ENCODE measurements at regions of chr16 and their contacts with region 1.

Region 1: DNA sequence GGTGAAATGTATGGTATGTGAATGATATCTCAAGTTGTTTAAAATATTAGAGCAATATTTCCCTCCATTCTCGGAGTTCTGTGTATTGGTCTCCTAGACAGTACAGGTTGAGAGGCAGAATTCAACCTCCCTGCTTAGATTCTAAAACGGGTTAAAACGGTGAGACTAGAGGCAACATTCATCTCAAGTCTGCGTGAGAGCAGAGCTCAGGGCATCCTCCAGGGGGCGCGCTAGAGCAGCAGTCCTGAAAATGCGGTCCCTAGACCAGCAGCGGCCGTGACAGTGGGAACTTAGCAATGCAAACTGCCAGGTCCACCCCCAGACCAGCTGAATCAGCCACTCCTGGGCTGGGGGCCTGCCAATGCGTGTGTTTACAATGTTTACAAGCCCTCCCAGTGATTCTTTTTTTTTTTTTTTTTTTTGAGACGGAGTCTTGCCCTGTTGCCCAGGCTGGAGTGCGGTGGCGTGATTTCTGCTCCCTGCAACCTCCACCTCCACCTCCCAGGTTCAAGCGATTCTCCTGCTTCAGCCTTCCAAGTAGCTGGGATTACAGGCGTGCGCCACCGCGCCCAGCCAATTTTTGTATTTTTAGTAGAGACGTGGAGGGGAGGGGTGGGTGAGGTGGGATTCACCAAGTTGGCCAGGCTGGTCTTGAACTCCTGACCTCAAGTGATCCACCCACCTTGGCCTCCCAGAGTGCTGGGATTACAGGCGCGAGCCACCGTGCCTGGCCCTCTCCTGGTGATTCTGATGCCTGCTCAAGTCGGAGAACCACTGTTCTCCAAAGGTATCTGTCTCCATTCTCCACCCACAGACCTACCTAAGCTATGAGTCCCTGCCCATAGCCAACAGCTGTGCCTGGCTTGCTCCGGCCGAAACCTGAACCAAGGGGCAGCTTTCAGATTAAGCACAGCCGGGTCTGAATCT is 24.2 kb downstream of the KLHL36 start:
- DNase-seq: peak; percentile 64 to 91 (median 80)
- ATAC-seq: peak; percentile 97
- H3K4me3 ChIP-seq: no peak overlapping the region
- H3K4me3 Mint-ChIP-seq: no peak overlapping the region
- H3K27ac ChIP-seq: no peak overlapping the region
- H3K27ac Mint-ChIP-seq: no peak overlapping the region
- H3K4me1 ChIP-seq: no peaks in the 10 kb centered on the region
- H3K4me1 Mint-ChIP-seq: peaks cover 6% of the 10 kb centered on the region
- H3K27me3 ChIP-seq: no peaks in the 10 kb centered on the region
- H3K27me3 Mint-ChIP-seq: no peaks in the 10 kb centered on the region
- CTCF ChIP-seq: peak; percentile 83

Region 2: DNA sequence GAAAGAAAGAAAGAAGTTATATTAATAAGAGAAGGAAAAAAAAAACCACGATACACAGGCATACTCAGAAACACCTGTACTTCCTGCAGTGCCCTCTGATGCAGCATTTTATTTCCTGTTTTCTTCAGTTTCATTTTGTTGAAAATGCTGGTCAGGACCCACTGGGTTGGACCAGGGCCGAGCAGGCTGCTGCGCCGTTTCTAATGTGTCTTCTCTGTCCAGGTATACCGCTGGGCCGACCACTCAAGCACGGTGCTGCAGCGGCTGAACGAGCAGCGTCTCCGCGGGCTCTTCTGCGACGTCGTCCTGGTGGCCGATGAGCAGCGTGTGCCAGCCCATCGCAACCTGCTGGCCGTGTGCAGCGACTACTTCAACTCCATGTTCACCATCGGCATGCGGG is 15.9 kb before region 1 on chr16:
- CTCF ChIA-PET with region 1: interaction called, 26 read pairs
- POLR2A ChIA-PET with region 1: no interaction called
- intact Hi-C with region 1: no loop called
- DNase-seq: no peak
- ATAC-seq: no peak
- H3K4me3 ChIP-seq: peak overlapping the region in 1 of 2 experiments; percentile 28
- H3K4me3 Mint-ChIP-seq: peak overlapping the region; percentile 50
- H3K27ac ChIP-seq: no peak overlapping the region
- H3K27ac Mint-ChIP-seq: no peak overlapping the region
- H3K4me1 ChIP-seq: peaks cover 67% of the 10 kb centered on the region
- H3K4me1 Mint-ChIP-seq: peaks cover 65% of the 10 kb centered on the region
- H3K27me3 ChIP-seq: no peaks in the 10 kb centered on the region
- H3K27me3 Mint-ChIP-seq: no peaks in the 10 kb centered on the region
- CTCF ChIP-seq: no peak

Region 3: DNA sequence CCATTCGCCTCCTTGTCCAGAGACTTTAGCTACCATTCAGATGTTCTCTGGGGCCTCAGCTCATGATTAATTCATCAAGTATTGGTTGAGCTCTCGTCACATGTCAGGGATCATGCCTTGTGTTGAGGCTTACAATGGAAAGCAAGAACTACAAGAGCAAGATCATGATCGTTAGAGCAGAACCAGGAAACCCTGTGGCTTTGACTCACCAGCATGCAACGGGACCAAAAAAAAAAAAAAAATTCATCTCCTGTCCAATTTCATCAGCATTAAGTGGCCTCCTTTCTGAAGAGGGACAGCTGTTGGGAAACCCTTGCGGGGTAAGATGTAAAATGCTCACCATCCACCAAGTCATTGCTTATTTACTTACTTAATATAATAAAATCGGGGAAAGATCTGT is 15.2 kb after region 1 on chr16:
- CTCF ChIA-PET with region 1: interaction called, 14 read pairs
- POLR2A ChIA-PET with region 1: no interaction called
- intact Hi-C with region 1: no loop called
- DNase-seq: peak in 1 of 9 experiments; percentile 15
- ATAC-seq: no peak
- H3K4me3 ChIP-seq: no peak overlapping the region
- H3K4me3 Mint-ChIP-seq: no peak overlapping the region
- H3K27ac ChIP-seq: no peak overlapping the region
- H3K27ac Mint-ChIP-seq: no peak overlapping the region
- H3K4me1 ChIP-seq: no peaks in the 10 kb centered on the region
- H3K4me1 Mint-ChIP-seq: no peaks in the 10 kb centered on the region
- H3K27me3 ChIP-seq: no peaks in the 10 kb centered on the region
- H3K27me3 Mint-ChIP-seq: peaks cover 17% of the 10 kb centered on the region
- CTCF ChIP-seq: no peak

Region 4: GRCh38 chr16:84699712-84700445 is 27.3 kb after region 1 on chr16 and contains the start of gene USP10:
- CTCF ChIA-PET with region 1: interaction called, 7 read pairs
- POLR2A ChIA-PET with region 1: no interaction called
- intact Hi-C with region 1: loop called in 1 of 2 experiments (anchors 1 kb)
- DNase-seq: peak; percentile 69 to 93 (median 83)
- ATAC-seq: peak; percentile 82
- H3K4me3 ChIP-seq: peak within 1 kb of the TSS; percentile 78 to 86
- H3K4me3 Mint-ChIP-seq: peak within 1 kb of the TSS; percentile 98
- H3K27ac ChIP-seq: peak within 1 kb of the TSS; percentile 67 to 68
- H3K27ac Mint-ChIP-seq: peak within 1 kb of the TSS; percentile 97
- H3K4me1 ChIP-seq: peaks cover 32% of the 10 kb centered on the region
- H3K4me1 Mint-ChIP-seq: peaks cover 43% of the 10 kb centered on the region
- H3K27me3 ChIP-seq: no peaks in the 10 kb centered on the region
- H3K27me3 Mint-ChIP-seq: no peaks in the 10 kb centered on the region
- CTCF ChIP-seq: no peak
- total RNA-seq, gene USP10: 104 to 107 TPM

Region 5: DNA sequence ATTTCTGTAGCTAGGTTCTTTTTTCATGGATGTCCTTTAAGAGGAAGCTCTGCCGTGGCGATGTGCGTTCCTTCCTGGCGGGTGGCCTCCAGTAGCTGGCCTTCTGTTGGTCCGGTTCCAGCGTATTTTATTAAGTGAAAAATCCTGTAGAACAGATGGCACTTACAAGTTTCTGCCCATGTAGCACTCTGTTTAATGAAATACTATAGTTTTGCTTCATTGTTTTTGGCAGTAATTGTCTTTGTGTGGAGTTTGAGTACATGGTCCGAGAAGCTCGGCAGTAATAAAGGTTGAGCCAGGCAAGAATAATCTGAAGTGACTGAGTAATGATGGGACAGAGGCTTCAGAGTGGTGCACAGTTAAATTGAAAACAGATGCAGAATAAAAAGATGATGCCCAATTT is 47.6 kb after region 1 on chr16:
- CTCF ChIA-PET with region 1: interaction called, 49 read pairs
- POLR2A ChIA-PET with region 1: no interaction called
- intact Hi-C with region 1: no loop called
- DNase-seq: no peak
- ATAC-seq: no peak
- H3K4me3 ChIP-seq: no peak overlapping the region
- H3K4me3 Mint-ChIP-seq: no peak overlapping the region
- H3K27ac ChIP-seq: no peak overlapping the region
- H3K27ac Mint-ChIP-seq: no peak overlapping the region
- H3K4me1 ChIP-seq: peaks cover 33% of the 10 kb centered on the region
- H3K4me1 Mint-ChIP-seq: peaks cover 76% of the 10 kb centered on the region
- H3K27me3 ChIP-seq: no peaks in the 10 kb centered on the region
- H3K27me3 Mint-ChIP-seq: no peaks in the 10 kb centered on the region
- CTCF ChIP-seq: no peak

Region 6: DNA sequence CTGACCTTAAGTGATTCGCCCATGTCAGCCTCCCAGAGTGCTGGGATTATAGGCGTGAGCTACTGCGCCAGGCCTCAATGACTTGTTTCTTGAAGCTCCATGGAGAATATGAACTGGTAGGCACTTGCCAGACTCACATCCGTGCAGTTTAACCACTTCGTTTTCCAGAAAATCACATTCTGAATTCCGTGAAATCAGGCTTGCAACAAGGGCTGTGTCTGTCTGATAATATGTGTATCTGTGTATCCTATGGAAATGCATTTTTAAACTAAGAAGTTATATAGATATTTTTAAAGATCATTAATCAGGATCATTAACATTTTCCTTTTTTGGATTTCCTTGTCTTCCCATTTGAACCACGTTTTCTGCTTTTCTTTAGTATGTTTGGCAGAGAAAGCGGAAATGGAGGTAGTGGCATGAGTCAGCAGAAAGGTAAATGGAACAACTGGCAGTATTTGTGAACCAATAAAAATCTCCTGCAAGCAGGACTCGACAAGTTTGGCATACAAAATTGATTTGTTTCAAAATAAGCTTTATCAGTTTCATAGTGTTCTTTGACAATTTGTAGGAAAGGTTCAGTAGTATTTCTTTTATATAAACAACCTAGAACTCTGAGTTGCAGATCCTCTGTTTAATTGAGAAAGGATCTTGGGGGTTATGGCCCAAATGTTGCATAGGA is 60.3 kb after region 1 on chr16:
- CTCF ChIA-PET with region 1: interaction called, 45 read pairs
- POLR2A ChIA-PET with region 1: no interaction called
- intact Hi-C with region 1: loop called in 1 of 2 experiments (anchors 1 kb)
- DNase-seq: no peak
- ATAC-seq: no peak
- H3K4me3 ChIP-seq: no peak overlapping the region
- H3K4me3 Mint-ChIP-seq: no peak overlapping the region
- H3K27ac ChIP-seq: no peak overlapping the region
- H3K27ac Mint-ChIP-seq: no peak overlapping the region
- H3K4me1 ChIP-seq: peaks cover 20% of the 10 kb centered on the region
- H3K4me1 Mint-ChIP-seq: peaks cover 44% of the 10 kb centered on the region
- H3K27me3 ChIP-seq: no peaks in the 10 kb centered on the region
- H3K27me3 Mint-ChIP-seq: no peaks in the 10 kb centered on the region
- CTCF ChIP-seq: no peak

Measured in CD8-positive, alpha-beta T cell (primary cell).